ENCODE measurements at regions of chr12 and their contacts with region 1.

Region 1: DNA sequence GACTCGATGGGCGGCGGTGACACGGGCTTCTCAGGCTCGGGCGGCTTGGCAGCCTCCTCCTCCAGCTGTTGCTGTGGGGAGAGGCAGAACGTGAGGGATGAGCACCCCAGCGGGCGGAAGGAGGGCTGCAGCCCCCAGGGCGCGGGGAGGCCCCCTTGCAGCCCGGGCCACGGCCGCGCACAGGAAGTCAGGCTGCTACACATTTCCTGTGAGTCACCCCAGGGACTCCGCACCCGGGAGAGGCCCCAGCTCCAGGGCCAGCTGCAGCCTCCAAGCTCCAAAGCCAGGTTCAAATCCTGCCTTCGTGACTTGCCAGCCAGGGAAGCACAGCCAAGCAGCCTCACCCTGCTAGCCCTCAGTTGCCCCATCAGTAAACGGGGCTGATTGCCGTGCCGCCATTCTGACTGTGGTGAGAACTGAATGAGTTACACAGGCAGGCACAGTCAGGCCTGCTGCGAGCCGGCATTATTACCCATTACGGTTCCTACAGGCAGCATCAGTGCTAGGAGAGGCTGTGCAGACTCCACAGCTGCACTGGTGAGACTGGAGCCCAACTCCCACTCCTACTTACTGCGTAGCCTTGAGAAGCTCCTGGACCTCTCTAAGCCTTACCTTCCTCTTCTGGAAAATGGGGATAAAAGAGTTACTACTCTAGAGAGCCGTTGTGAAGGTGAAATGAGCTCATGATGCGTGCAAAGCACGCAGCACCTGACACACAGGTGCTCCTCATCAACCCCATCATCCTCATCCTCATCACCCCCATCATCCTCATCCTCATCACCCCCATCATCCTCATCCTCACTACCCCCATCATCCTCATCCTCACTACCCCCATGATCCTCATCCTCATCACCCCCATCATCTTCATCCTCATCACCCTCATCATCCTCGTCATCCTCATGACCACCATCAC is 100.9 kb downstream of the NCOR2 start:
- DNase-seq: peak; percentile 93
- ATAC-seq: peak; percentile 98
- H3K4me3 Mint-ChIP-seq: peak overlapping the region; percentile 69
- H3K27ac Mint-ChIP-seq: peak overlapping the region; percentile 92
- H3K4me1 Mint-ChIP-seq: peaks cover 54% of the 10 kb centered on the region
- H3K27me3 Mint-ChIP-seq: no peaks in the 10 kb centered on the region

Region 2: GRCh38 chr12:124053851-124054250 is 412.6 kb before region 1 on chr12:
- CTCF ChIA-PET with region 1: no interaction called
- POLR2A ChIA-PET with region 1: no interaction called
- DNase-seq: no peak
- ATAC-seq: no peak
- H3K4me3 Mint-ChIP-seq: no peak overlapping the region
- H3K27ac Mint-ChIP-seq: no peak overlapping the region
- H3K4me1 Mint-ChIP-seq: no peaks in the 10 kb centered on the region
- H3K27me3 Mint-ChIP-seq: no peaks in the 10 kb centered on the region

Region 3: DNA sequence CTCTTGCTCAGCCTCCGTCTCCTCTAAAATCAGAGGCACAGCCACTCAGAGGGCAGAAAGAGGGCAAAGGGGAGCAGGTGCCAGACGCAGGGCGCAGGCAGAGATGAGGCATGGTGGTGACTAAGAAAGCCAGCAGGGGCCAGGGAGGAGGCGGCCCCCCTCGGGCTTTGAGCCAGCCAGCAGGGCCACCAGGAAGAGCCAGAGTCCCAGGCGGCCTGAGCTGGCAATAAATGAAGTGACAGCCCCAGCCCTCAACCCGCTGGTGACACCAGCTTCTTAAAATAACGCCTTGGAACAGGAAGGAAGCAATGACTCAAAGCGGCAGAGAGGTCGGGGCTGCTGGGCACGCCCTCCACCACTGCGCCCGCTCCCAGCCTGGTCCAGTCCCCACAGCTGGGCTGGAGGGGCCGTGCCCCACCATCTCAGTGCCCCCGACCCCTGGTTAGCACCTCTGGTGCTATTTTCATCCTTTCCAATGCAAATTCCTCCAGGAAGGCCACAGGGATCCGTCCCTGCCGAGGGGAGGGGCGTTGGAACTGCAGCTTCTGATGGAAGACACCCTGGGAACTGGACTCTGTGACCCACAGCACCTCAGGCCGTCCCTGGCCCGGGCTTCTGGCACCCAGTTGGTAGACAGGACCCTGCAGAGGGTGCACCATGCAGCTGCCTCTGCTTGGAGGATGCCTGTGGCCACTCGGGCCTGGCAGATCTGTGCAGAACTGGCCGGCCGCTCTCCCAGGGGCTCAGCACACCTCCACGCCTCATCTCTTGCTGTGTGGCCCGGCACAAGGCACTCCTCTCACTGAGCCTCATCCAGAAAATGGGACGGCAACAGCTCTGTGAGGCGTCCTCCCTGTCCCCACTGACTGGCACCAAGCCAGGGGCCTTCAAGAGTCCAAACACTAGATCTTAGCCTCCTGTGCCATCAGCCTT is 12.8 kb before region 1 on chr12:
- CTCF ChIA-PET with region 1: interaction called, 21 read pairs
- POLR2A ChIA-PET with region 1: interaction called, 34 read pairs
- DNase-seq: peak; percentile 90
- ATAC-seq: peak; percentile 84
- H3K4me3 Mint-ChIP-seq: peak overlapping the region; percentile 63
- H3K27ac Mint-ChIP-seq: peak overlapping the region; percentile 90
- H3K4me1 Mint-ChIP-seq: peaks cover 81% of the 10 kb centered on the region
- H3K27me3 Mint-ChIP-seq: no peaks in the 10 kb centered on the region

Measured in activated CD8-positive, alpha-beta T cell treated with anti-CD3 and anti-CD28 coated beads, Interleukin-2, amount 10 ng/mL, durations not matched to agents 7 days and 5 days (primary cell).